Stomach (tissue), 19 donors: ENCODE measurements at regions of chr5 and their contacts with region 1.

Region 1: DNA sequence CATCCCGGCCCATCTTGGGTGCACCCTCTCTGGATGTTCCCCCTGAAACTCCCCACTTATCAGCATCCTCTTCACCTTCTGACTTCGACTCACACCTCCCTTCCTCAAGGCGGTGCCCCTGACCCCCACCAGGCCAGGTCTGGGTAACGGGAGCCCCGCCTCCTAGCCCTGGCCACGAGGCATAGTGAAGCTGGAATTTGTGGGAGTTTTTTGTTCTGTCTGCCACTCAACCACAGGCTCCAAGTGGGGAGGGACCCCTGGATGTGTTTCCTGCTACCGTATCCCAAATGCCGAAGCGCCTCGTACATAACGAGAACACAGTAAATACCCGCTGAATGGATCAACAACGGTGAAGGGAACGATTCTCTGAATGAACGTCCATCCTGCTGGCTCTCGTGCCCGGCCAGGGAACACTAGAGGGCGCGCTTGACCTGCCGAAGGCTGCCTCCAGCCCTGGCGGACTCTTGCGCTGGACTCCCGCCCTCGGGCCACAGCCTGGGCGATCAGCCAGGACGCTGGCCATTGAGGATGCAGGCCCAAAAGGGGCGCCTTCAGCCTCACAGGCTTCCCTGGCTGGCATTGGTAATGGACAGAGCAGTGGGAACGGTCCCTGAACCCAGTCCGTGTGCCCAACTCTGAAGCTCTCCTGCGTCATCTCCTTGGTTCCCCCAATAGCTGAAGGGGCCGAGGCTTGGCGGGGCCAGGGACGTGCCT is 47.3 kb upstream of the PHYKPL start:
- DNase-seq: peak; percentile 90 to 93
- H3K4me3 ChIP-seq: no peak overlapping the region
- H3K27ac ChIP-seq: no peak overlapping the region
- H3K4me1 ChIP-seq: peaks cover 0 to 7% (median 6%) of the 10 kb centered on the region in 4 donors
- H3K27me3 ChIP-seq: peaks cover 0 to 41% (median 10%) of the 10 kb centered on the region in 3 donors
- CTCF ChIP-seq: peak in 5 of 7 experiments; percentile 69 to 92 (median 83)
- EP300 ChIP-seq: no peak
- POLR2A ChIP-seq: no peak

Region 2: DNA sequence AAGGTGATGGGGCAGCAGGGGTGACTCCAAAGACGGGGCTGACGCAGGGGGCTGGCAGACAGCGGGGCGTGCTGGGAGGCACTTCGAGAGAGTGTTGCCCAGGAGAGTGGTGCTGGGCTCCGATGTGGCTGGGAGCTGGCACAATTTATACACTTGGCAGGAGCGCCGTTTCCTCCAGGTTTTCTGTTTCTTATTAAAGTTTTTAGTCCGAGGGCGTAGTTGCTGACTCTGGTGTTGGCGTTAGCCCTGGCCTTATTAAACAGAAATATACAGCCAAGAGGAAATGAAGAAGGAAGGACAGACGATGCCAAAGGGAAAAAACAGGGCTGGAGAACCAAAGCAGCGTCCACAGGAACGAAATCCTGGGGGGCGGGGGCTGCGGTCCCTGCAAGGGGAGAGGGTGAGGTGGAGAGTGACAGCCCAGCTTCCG is 92.3 kb after region 1 on chr5:
- intact Hi-C with region 1: no loop called
- DNase-seq: peak in 1 of 2 donors; percentile 50
- H3K4me3 ChIP-seq: peak overlapping the region in 1 of 4 donors; percentile 5
- H3K27ac ChIP-seq: peak overlapping the region in 3 of 5 donors; percentile 59 to 76 (median 62)
- H3K4me1 ChIP-seq: peaks cover 0 to 15% (median 7%) of the 10 kb centered on the region in 4 donors
- H3K27me3 ChIP-seq: peaks cover 0 to 21% (median 0%) of the 10 kb centered on the region in 3 donors
- CTCF ChIP-seq: no peak
- EP300 ChIP-seq: no peak
- POLR2A ChIP-seq: no peak

Region 3: DNA sequence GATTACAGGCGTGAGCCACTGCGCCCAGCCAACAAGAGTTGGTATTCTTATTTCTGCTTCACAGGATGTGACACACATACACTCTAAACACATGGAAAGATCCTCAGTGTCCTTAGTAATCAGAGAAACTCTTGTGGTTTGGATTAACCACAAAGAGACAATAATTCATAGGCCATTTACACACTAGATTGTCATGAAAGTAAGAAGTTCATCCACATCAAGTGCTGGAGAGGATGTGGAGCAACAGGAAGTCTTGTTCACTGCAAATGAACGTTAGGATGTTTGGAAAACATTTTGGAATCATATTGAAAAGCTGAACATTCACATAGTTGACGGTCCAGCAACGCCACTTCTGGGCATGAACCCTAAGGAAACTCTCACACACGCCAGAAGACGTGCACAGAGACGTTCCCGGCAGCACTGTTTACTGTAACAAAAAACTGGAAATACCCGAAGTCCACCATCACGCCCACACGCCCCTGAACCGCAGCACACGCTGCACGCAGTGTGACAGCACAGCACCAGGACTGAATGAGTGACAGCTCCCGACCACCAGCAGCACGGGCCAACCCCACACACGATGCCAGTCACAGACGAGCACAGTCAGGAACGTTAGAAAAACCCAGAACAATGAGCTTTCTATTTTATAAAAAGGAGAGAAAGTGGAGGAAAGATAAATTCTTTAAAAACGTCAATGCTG is 222.7 kb after region 1 on chr5:
- intact Hi-C with region 1: no loop called
- DNase-seq: no peak
- H3K4me3 ChIP-seq: no peak overlapping the region
- H3K27ac ChIP-seq: no peak overlapping the region
- H3K4me1 ChIP-seq: no peaks in the 10 kb centered on the region
- H3K27me3 ChIP-seq: no peaks in the 10 kb centered on the region
- CTCF ChIP-seq: no peak
- EP300 ChIP-seq: no peak
- POLR2A ChIP-seq: no peak

Region 4: DNA sequence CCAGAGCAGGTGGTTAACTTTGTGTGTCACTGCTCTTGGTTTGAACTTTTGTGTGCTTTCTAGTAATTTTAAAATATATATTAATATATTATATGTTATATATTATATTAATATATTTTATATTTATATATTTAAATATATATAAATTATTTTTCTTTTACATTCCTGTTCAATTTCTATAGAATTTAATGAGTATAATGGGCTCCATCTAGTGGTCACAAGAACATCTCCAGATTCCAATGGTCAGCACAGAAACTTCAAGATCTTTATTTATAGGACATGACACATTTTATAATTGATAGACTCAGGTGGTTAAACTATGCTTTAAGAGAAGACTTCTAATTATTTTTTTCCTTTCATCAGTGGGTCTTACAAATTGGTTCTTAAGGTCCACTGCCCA is 271.2 kb after region 1 on chr5:
- intact Hi-C with region 1: loop called (anchors 2 kb)
- DNase-seq: no peak
- H3K4me3 ChIP-seq: no peak overlapping the region
- H3K27ac ChIP-seq: no peak overlapping the region
- H3K4me1 ChIP-seq: no peaks in the 10 kb centered on the region
- H3K27me3 ChIP-seq: peaks cover 0 to 13% (median 0%) of the 10 kb centered on the region in 3 donors
- CTCF ChIP-seq: peak in 3 of 7 experiments; percentile 35 to 53 (median 42)
- EP300 ChIP-seq: no peak
- POLR2A ChIP-seq: no peak

Region 5: GRCh38 chr5:178589180-178590140 is 309.6 kb after region 1 on chr5:
- intact Hi-C with region 1: loop called (anchors 10 kb)
- DNase-seq: peak in 1 of 2 donors; percentile 83
- H3K4me3 ChIP-seq: peak overlapping the region; percentile 50 to 68 (median 58)
- H3K27ac ChIP-seq: peak overlapping the region in 1 of 5 donors; percentile 54
- H3K4me1 ChIP-seq: peaks cover 16 to 41% (median 23%) of the 10 kb centered on the region in 4 donors
- H3K27me3 ChIP-seq: peaks cover 0 to 75% (median 22%) of the 10 kb centered on the region in 3 donors
- CTCF ChIP-seq: no peak
- EP300 ChIP-seq: no peak
- POLR2A ChIP-seq: no peak